Activated T-helper 1 cell treated with anti-CD3 and anti-CD28 coated beads, Interleukin-12 subunit alpha, Interleukin-12 subunit beta, Interleukin-2, Interleukin-4 antibody, amounts not matched to agents 30 ng/mL and 10 ng/mL and 1 ng/mL, durations not matched to agents 14 hours and 24 hours and 36 hours (primary cell): ENCODE measurements at regions of chr7 and their contacts with region 1.

Region 1: GRCh38 chr7:35694781-35695472 is at the start of gene HERPUD2:
- DNase-seq: peak; percentile 88
- H3K4me3 Mint-ChIP-seq: peak within 1 kb of the TSS; percentile 99
- H3K27ac Mint-ChIP-seq: peak within 1 kb of the TSS; percentile 98
- H3K4me1 Mint-ChIP-seq: peaks cover 71% of the 10 kb centered on the region
- H3K27me3 Mint-ChIP-seq: no peaks in the 10 kb centered on the region
- total RNA-seq, gene HERPUD2: 24.7 and 24.8 TPM in 2 replicates

Region 2: GRCh38 chr7:35424869-35425495 is 269.9 kb before region 1 on chr7:
- intact Hi-C with region 1: no loop called
- DNase-seq: peak; percentile 17
- H3K4me3 Mint-ChIP-seq: no peak overlapping the region
- H3K27ac Mint-ChIP-seq: no peak overlapping the region
- H3K4me1 Mint-ChIP-seq: no peaks in the 10 kb centered on the region
- H3K27me3 Mint-ChIP-seq: peaks cover 12% of the 10 kb centered on the region

Region 3: GRCh38 chr7:35657125-35657524 is 37.8 kb before region 1 on chr7:
- intact Hi-C with region 1: loop called (anchors 2 kb)
- DNase-seq: no peak
- H3K4me3 Mint-ChIP-seq: no peak overlapping the region
- H3K27ac Mint-ChIP-seq: no peak overlapping the region
- H3K4me1 Mint-ChIP-seq: peaks cover 31% of the 10 kb centered on the region
- H3K27me3 Mint-ChIP-seq: no peaks in the 10 kb centered on the region

Region 4: DNA sequence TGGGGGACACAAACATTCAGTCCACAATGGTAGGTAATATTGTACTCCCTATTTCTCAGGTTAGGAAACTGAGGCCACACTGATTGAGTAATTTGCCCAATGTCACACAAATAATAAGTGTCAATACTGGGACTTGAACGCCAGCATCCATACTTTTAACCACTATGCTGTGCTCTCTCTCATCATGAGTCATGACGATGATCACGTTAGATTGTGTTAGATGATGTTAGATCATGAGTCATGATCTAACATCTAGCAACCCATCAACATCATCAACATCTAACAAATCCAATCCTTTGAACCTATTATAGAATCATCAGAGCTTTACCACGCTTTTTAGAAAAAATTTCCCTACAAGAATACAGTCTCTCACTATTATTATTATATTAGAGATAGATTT is 28.1 kb after region 1 on chr7:
- intact Hi-C with region 1: loop called (anchors 1 kb)
- DNase-seq: no peak
- H3K4me3 Mint-ChIP-seq: peak overlapping the region; percentile 24
- H3K27ac Mint-ChIP-seq: peak overlapping the region; percentile 56
- H3K4me1 Mint-ChIP-seq: peaks cover 49% of the 10 kb centered on the region
- H3K27me3 Mint-ChIP-seq: peaks cover 6% of the 10 kb centered on the region

Region 5: DNA sequence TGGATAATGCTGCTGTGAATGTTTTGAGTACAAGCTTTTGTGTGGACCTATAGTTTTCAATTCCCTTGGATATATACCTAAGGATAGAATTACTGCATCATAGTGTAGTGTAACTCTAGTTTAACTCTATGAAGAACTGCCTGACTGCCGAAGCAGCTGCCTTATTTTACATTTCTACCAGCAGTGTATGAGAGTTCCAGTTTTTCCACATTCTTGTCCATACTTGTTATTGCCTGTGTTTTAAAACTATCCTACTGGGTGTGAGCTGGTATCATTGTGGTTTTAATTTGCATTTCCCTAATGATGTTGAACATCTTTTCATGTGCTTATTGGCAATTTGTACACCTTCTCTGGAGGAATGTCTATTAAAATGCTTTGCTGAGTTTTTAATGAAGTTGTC is 121.6 kb after region 1 on chr7:
- intact Hi-C with region 1: loop called (anchors 1 kb)
- DNase-seq: no peak
- H3K4me3 Mint-ChIP-seq: no peak overlapping the region
- H3K27ac Mint-ChIP-seq: no peak overlapping the region
- H3K4me1 Mint-ChIP-seq: peaks cover 61% of the 10 kb centered on the region
- H3K27me3 Mint-ChIP-seq: no peaks in the 10 kb centered on the region

Region 6: DNA sequence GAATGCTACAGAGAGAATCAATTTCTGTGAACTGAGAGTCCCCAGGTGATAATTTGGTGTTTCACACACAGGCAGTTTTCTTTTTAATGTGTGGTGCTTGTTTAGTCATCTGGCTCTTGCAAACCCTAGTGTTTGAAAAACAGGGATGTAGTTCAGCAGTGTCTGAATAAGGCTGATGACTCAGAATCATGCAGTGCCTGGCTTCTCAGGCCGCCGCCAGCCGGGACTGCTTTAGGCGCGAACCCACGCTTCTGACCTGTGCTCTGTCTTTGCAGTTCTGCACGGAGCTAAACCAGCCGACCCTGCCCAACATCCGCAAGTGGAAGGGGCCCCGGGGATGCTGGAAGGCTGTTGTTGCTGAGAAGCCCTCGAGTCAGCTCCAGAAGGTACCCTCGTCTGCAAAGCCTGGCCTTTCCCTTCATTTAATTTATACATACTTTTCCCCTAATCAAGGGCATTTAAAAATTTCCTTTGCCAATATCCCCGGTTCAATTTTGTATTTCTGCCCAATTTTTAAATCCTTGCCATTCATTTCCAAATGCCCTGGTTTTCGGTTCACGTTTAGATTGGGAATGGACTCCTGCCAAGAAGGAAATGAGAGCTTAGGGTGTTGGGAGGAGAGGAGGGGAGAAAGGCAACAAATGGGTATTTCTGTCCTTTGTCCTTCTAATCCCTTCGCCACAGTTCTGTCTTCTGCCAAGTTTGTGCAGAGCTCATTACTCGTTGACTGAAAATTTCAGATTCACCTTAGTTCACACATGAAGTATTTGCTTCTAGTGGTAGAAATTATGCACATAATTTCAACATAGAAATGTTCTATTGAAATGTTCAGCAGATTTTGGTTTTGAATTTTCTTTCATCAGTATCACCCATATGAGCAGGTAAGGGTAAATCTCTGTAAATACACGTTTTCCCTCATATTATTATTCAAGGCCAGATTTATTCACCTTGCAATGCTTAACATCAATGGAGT is 586.2 kb after region 1 on chr7:
- intact Hi-C with region 1: loop called (anchors 10 kb)
- DNase-seq: no peak
- H3K4me3 Mint-ChIP-seq: no peak overlapping the region
- H3K27ac Mint-ChIP-seq: no peak overlapping the region
- H3K4me1 Mint-ChIP-seq: peaks cover 21% of the 10 kb centered on the region
- H3K27me3 Mint-ChIP-seq: peaks cover 4% of the 10 kb centered on the region